A673 (cell line): ENCODE measurements at regions of chr7 and their contacts with region 1.

Region 1: GRCh38 chr7:117119192-117119924 is 166.1 kb downstream of the ST7 start:
- DNase-seq: peak; percentile 88
- H3K4me3 ChIP-seq: no peak overlapping the region
- H3K27ac ChIP-seq: no peak overlapping the region
- H3K4me1 ChIP-seq: no peaks in the 10 kb centered on the region
- H3K27me3 ChIP-seq: no peaks in the 10 kb centered on the region
- CTCF ChIP-seq: peak; percentile 95

Region 2: GRCh38 chr7:116601426-116601825 is 517.9 kb before region 1 on chr7:
- CTCF ChIA-PET with region 1: no interaction called
- POLR2A ChIA-PET with region 1: no interaction called
- intact Hi-C with region 1: loop called (anchors 10 kb)
- DNase-seq: peak; percentile 25
- H3K4me3 ChIP-seq: no peak overlapping the region
- H3K27ac ChIP-seq: no peak overlapping the region
- H3K4me1 ChIP-seq: peaks cover 6% of the 10 kb centered on the region
- H3K27me3 ChIP-seq: no peaks in the 10 kb centered on the region
- CTCF ChIP-seq: no peak

Region 3: DNA sequence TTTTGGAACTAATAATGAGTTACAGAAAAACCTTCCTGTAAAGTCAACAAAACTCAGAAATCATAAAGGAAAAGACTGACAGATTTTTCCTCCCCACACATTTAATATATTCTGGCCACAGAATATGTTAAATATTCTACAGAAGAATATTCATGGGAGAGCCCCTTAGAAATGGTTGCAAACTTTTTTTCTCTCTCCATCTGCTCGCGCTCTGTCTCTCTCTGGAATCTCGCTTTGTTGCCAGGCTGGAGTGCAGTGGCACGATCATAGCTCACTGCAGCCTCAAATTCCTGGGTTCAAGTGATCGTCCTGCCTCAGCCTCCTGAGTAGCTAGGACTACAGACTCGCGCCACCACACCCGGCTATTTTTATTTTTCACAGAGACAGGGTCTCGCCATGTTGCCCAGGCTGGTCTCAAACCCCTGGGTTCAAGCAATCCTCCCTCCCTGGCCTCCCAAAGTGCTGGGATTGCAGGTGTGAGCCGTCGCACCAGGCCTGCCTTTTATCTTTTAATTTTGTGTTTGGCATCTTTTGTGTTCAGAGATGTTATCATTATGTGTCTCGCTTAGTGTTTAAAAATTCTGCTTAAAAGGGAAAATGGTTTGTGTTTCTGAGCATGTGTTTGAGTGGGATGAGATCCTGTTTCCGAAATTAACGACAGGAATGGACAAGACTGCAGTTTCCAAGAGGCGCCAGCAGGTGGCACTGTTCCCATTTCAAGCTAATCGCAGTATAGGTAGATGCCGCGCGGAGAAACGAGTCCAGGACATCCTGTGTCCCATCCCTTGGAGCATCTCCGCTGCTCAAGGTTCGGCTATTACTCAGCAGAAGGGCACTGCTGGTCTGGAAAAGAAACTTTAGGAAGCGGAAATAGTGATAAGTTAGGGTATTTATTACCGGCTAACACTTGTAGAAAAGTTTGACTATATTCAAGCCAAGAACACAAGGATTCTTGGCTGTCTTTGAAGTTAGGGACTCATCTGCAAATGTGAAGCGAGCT is 189.1 kb before region 1 on chr7:
- CTCF ChIA-PET with region 1: no interaction called
- POLR2A ChIA-PET with region 1: no interaction called
- intact Hi-C with region 1: loop called (anchors 1 kb)
- DNase-seq: peak; percentile 88
- H3K4me3 ChIP-seq: no peak overlapping the region
- H3K27ac ChIP-seq: no peak overlapping the region
- H3K4me1 ChIP-seq: no peaks in the 10 kb centered on the region
- H3K27me3 ChIP-seq: no peaks in the 10 kb centered on the region
- CTCF ChIP-seq: peak; percentile 93

Region 4: GRCh38 chr7:116984917-116985316 is 134.4 kb before region 1 on chr7:
- CTCF ChIA-PET with region 1: interaction called, 4 read pairs
- POLR2A ChIA-PET with region 1: no interaction called
- intact Hi-C with region 1: loop called (anchors 1 kb)
- DNase-seq: peak; percentile 54
- H3K4me3 ChIP-seq: no peak overlapping the region
- H3K27ac ChIP-seq: no peak overlapping the region
- H3K4me1 ChIP-seq: peaks cover 8% of the 10 kb centered on the region
- H3K27me3 ChIP-seq: no peaks in the 10 kb centered on the region
- CTCF ChIP-seq: peak; percentile 80

Region 5: DNA sequence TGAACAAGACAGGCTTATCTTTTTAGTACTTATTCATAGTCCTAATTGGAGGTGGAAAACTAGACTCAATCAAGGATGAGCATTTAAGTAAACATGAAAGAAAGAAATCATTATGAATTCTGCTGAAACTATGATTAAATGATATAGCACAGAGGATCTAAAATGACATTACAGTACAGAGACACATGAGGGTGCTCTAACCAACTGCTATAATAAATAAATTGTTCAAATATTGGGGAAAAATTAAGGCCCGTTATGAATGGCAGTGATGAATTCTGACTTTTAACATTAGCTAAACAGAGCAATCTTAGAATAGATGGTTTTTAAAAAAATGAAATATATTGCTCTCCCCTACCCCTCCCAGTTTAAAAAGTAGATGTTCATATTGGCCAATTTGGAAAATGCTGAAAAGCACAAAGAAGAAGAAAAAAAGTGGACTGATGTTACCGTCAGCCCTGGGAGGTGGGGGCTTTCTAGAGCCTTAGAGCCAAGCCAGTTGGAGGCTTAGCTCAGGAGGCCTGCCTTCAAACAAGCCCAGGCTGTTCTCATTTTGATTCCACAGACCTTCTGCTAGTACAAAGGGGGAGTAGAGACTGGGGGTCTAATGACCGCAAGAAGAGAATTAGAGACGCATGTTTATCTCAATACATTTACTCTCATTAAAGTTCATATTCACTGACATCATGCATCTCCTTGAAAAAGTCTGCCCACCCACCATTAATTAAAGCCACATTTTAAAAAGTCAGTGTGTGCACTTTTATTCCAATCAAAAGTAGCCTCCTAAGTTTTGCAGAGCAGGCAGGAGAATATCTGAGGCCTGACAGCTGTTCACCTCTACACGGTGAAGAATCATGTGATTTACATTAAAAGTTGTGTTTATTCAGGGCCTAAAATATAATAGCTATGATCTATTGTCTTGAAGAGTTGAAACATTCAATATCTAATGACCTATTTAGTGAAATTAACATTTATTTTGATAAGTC is 193.5 kb after region 1 on chr7:
- CTCF ChIA-PET with region 1: no interaction called
- POLR2A ChIA-PET with region 1: no interaction called
- intact Hi-C with region 1: no loop called
- DNase-seq: no peak
- H3K4me3 ChIP-seq: no peak overlapping the region
- H3K27ac ChIP-seq: no peak overlapping the region
- H3K4me1 ChIP-seq: no peaks in the 10 kb centered on the region
- H3K27me3 ChIP-seq: peaks cover 6% of the 10 kb centered on the region
- CTCF ChIP-seq: peak; percentile 38; the same call in 1 of the 2 replicates